ENCODE measurements at regions of chr16 and their contacts with region 1.

Region 1: GRCh38 chr16:69520800-69521602 is 44.8 kb upstream of the NFAT5 start:
- DNase-seq: no peak
- H3K4me3 ChIP-seq: no peak overlapping the region
- H3K27ac ChIP-seq: no peak overlapping the region
- H3K4me1 ChIP-seq: no peaks in the 10 kb centered on the region
- H3K27me3 ChIP-seq: no peaks in the 10 kb centered on the region
- CTCF ChIP-seq: no peak
- EP300 ChIP-seq: no peak
- POLR2A ChIP-seq: no peak

Region 2: GRCh38 chr16:69451166-69451565 is 69.8 kb before region 1 on chr16:
- intact Hi-C with region 1: loop called (anchors 10 kb)
- DNase-seq: no peak
- H3K4me3 ChIP-seq: no peak overlapping the region
- H3K27ac ChIP-seq: peak overlapping the region in 1 of 4 donors; percentile 6
- H3K4me1 ChIP-seq: peaks cover 11 to 36% (median 17%) of the 10 kb centered on the region in 4 donors
- H3K27me3 ChIP-seq: no peaks in the 10 kb centered on the region
- CTCF ChIP-seq: no peak
- EP300 ChIP-seq: no peak
- POLR2A ChIP-seq: no peak

Measured in esophagus muscularis mucosa (tissue), 4 donors.